A549 (cell line): ENCODE measurements at regions of chr15 and their contacts with region 1.

Region 1: DNA sequence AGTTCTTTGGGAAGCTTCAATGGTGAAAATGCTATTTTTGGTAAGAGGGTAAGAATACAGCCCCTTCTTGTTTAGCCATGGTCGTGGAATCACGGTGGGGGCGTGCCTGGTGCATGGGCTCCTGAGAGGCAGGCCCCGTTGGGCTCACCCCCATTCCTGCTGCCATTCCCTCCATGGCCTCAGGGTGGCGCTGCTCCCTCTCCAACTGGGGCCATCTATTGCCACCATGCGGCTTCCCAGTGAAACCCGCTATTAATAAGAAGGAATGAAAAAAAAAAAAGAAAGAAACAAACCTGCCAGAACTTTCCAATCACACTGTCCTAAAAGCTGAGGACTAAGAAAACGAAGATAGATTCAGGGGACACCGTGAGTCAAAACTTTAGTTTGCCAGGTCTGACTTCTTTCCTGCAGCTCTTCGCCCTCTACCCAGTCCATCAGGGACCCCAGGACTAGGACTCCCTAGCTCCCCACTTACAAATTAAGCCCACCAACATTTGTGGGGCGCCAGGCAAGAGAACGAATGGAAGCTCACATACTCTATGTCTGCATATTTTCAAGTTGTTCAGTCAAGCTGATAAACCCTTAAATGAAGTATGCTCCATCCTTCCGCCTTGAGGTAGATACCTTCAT is 30.6 kb upstream of the ABHD2 start:
- DNase-seq: peak; percentile 80 to 91
- ATAC-seq: peak; percentile 93 to 97
- H3K4me3 ChIP-seq: no peak overlapping the region
- H3K27ac ChIP-seq: peak overlapping the region; percentile 55 to 57; a peak in 5 of 6 replicates
- H3K4me1 ChIP-seq: peaks cover 6% of the 10 kb centered on the region; the same call in 1 of the 3 replicates
- CTCF ChIP-seq: peak; percentile 100
- EP300 ChIP-seq: no peak
- POLR2A ChIP-seq: no peak
- RAD21 ChIP-seq: peak; percentile 100

Region 2: GRCh38 chr15:88834211-88834812 is 223.3 kb before region 1 on chr15:
- CTCF ChIA-PET with region 1: no interaction called
- POLR2A ChIA-PET with region 1: no interaction called
- DNase-seq: peak; percentile 44 to 57
- ATAC-seq: peak; percentile 61 to 87
- H3K4me3 ChIP-seq: no peak overlapping the region
- H3K27ac ChIP-seq: no peak overlapping the region
- H3K4me1 ChIP-seq: no peaks in the 10 kb centered on the region; the same call in 2 of the 3 replicates
- CTCF ChIP-seq: peak; percentile 84
- EP300 ChIP-seq: no peak
- POLR2A ChIP-seq: no peak
- RAD21 ChIP-seq: peak; percentile 95 to 96

Region 3: GRCh38 chr15:88904624-88905327 is 152.8 kb before region 1 on chr15:
- CTCF ChIA-PET with region 1: interaction called, 40 read pairs
- POLR2A ChIA-PET with region 1: no interaction called
- DNase-seq: peak; percentile 82 to 89
- ATAC-seq: peak; percentile 64 to 88
- H3K4me3 ChIP-seq: no peak overlapping the region
- H3K27ac ChIP-seq: peak overlapping the region; percentile 49 to 71
- H3K4me1 ChIP-seq: peaks cover 33% of the 10 kb centered on the region
- CTCF ChIP-seq: peak; percentile 99
- EP300 ChIP-seq: no peak
- POLR2A ChIP-seq: no peak
- RAD21 ChIP-seq: peak; percentile 97

Region 4: GRCh38 chr15:89034288-89034687 is 23.3 kb before region 1 on chr15:
- CTCF ChIA-PET with region 1: interaction called, 16 read pairs
- POLR2A ChIA-PET with region 1: no interaction called
- DNase-seq: peak; percentile 54 to 62
- ATAC-seq: peak; percentile 56 to 76; a peak in 5 of 6 replicates
- H3K4me3 ChIP-seq: no peak overlapping the region
- H3K27ac ChIP-seq: no peak overlapping the region
- H3K4me1 ChIP-seq: no peaks in the 10 kb centered on the region
- CTCF ChIP-seq: peak; percentile 62
- EP300 ChIP-seq: no peak
- POLR2A ChIP-seq: no peak
- RAD21 ChIP-seq: peak; percentile 63 to 78

Region 5: GRCh38 chr15:89087830-89088604 is 30.4 kb after region 1 on chr15 and contains the start of gene ABHD2:
- CTCF ChIA-PET with region 1: interaction called, 151 read pairs
- POLR2A ChIA-PET with region 1: interaction called, 5 read pairs
- DNase-seq: peak; percentile 100
- ATAC-seq: peak; percentile 92 to 98
- H3K4me3 ChIP-seq: peak within 1 kb of the TSS; percentile 78
- H3K27ac ChIP-seq: peak within 1 kb of the TSS; percentile 80 to 88
- H3K4me1 ChIP-seq: peaks cover 44% of the 10 kb centered on the region
- CTCF ChIP-seq: no peak
- EP300 ChIP-seq: no peak
- POLR2A ChIP-seq: peak; percentile 70
- RAD21 ChIP-seq: 0 out of 5 replicates have a peak, but pooled peaks of 1 of the 2 experiments have one; percentile 30
- polyA plus RNA-seq, gene ABHD2: 63.3 and 76.4 TPM in 2 replicates

Region 6: DNA sequence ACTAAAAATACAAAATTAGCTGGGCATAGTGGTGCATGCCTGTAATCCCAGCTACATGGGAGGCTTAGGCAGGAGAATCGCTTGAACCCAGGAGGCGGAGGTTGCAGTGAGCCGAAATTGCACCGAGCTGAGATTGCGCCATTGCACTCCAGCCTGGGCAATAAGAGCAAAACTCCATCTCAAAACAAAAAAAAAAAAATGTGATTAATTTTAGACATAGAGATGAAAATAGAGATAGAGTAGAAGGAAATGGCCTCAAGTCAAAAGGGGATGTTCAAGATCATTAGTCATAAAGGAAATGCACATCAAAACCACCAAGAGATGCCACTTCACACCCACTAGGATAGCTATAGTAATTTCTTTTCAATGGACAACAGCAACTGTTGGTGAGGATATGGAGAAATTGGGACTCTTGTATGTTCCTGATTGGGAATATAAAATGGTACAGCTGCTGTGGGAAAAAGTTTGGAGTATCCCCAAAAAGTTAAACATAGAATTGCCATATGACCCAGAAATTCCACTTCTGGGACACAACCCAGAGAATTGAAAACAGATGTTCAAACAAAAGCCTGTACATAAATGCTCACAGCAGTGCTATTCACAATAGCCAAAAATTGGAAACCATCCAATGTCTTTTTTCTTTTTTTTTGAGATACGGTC is 86.0 kb after region 1 on chr15:
- CTCF ChIA-PET with region 1: interaction called, 28 read pairs
- POLR2A ChIA-PET with region 1: no interaction called
- DNase-seq: no peak
- ATAC-seq: no peak
- H3K4me3 ChIP-seq: no peak overlapping the region
- H3K27ac ChIP-seq: no peak overlapping the region
- H3K4me1 ChIP-seq: peaks cover 36% of the 10 kb centered on the region
- CTCF ChIP-seq: no peak
- EP300 ChIP-seq: no peak
- POLR2A ChIP-seq: no peak
- RAD21 ChIP-seq: no peak

Region 7: DNA sequence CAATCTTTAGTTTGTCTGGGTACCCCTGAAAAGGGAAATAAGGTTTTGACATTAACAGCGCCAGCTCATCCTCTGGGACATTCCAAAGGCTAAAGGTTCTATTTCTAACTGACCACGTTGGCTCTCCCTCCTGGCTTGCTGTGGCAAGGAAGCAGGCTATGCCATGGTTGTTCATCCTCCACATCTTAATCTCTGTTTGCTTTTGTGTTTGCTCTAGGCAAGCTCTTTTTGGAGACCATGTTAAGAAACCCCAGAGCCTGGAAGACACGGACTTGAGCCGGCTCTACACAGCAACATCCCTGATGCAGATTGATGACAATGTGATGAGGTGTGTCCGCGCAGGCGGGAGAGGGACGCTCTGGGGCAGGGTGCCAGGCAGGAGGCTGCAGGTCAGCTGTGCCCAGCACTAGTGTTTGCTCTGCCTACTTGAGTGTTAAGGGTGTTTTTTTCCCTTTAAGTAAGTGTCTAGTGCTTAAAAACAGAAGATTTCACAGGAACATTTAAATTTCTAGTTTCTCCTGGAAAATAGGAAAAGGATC is 130.4 kb after region 1 on chr15:
- CTCF ChIA-PET with region 1: interaction called, 735 read pairs
- POLR2A ChIA-PET with region 1: no interaction called
- DNase-seq: no peak
- ATAC-seq: no peak
- H3K4me3 ChIP-seq: no peak overlapping the region
- H3K27ac ChIP-seq: no peak overlapping the region
- H3K4me1 ChIP-seq: no peaks in the 10 kb centered on the region
- CTCF ChIP-seq: no peak
- EP300 ChIP-seq: no peak
- POLR2A ChIP-seq: no peak
- RAD21 ChIP-seq: no peak

Region 8: GRCh38 chr15:89230277-89230676 is 172.7 kb after region 1 on chr15:
- CTCF ChIA-PET with region 1: interaction called, 17 read pairs
- POLR2A ChIA-PET with region 1: no interaction called
- DNase-seq: no peak
- ATAC-seq: peak; percentile 73 to 86
- H3K4me3 ChIP-seq: no peak overlapping the region
- H3K27ac ChIP-seq: no peak overlapping the region
- H3K4me1 ChIP-seq: no peaks in the 10 kb centered on the region
- CTCF ChIP-seq: no peak
- EP300 ChIP-seq: no peak
- POLR2A ChIP-seq: no peak
- RAD21 ChIP-seq: no peak

Region 9: GRCh38 chr15:89293012-89293411 is 235.4 kb after region 1 on chr15:
- CTCF ChIA-PET with region 1: no interaction called
- POLR2A ChIA-PET with region 1: no interaction called
- DNase-seq: peak in 1 of 2 experiments; percentile 24
- ATAC-seq: peak in 1 of 2 experiments; percentile 67; a peak in 2 of 6 replicates
- H3K4me3 ChIP-seq: no peak overlapping the region
- H3K27ac ChIP-seq: no peak overlapping the region
- H3K4me1 ChIP-seq: no peaks in the 10 kb centered on the region
- CTCF ChIP-seq: no peak; the same call in 2 of the 3 replicates
- EP300 ChIP-seq: no peak
- POLR2A ChIP-seq: no peak
- RAD21 ChIP-seq: no peak